ENCODE measurements at regions of chr2 and their contacts with region 1.

Region 1: DNA sequence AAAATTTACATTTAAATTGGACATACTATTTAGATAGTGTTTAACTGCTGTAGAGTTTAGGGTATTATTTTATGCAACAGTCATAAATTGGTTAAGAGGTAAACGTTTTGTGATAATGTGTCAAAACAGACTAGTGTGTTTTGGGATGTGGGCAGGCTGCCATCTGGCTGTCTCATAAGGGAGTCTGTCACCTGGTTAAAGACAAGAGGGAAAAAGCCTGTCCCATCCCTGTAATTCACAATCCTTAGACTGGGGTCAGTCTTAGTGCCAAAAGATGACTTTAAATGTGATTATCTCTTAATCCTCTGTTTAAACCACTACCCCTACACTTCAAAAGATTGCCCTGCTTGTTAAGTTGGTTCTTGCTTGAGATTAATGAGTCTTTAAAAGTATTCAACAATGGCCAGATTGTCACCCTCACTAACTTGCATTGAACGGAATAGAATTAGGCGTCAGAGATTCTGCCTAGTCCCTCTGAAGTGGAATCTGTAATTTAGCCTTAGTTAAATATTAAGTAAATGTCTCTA is 59.2 kb downstream of the SGPP2 start:
- DNase-seq: no peak
- ATAC-seq: peak; percentile 50; the same call in 2 of the 3 replicates
- H3K4me3 ChIP-seq: no peak overlapping the region
- H3K27ac ChIP-seq: no peak overlapping the region
- H3K4me1 ChIP-seq: no peaks in the 10 kb centered on the region
- H3K27me3 ChIP-seq: no peaks in the 10 kb centered on the region
- CTCF ChIP-seq: peak in 2 of 3 experiments; percentile 25 to 63; a peak in 3 of 6 replicates
- EP300 ChIP-seq: no peak
- POLR2A ChIP-seq: no peak
- RAD21 ChIP-seq: peak; percentile 38; the same call in 1 of the 2 replicates

Region 2: DNA sequence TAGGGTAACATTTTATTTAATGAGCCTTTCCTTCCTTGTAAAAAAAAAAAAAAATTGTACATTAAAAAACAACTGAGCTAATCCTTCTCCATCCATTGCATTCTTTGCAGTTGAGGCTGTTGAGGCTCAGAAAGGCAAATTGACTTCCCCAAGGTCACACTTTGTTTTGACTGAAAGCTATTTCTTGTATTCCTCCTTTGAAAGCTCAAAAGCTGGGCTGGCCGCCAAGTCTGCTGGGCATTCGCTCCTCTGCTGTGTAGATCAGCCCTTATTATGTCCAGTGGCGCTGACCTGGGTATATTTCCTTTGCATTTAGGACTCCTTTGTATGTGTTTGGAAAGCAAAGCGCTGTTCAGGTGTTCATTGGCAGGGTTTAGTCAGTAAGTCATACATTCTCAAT is 15.2 kb before region 1 on chr2:
- CTCF ChIA-PET with region 1: interaction called, 4 read pairs
- POLR2A ChIA-PET with region 1: interaction called, 3 read pairs
- RAD21 ChIA-PET with region 1: no interaction called
- SMC1A ChIA-PET with region 1: interaction called, 13 read pairs
- in situ Hi-C with region 1: no loop called
- intact Hi-C with region 1: no loop called
- DNase-seq: no peak
- ATAC-seq: no peak
- H3K4me3 ChIP-seq: no peak overlapping the region
- H3K27ac ChIP-seq: no peak overlapping the region
- H3K4me1 ChIP-seq: no peaks in the 10 kb centered on the region
- H3K27me3 ChIP-seq: no peaks in the 10 kb centered on the region
- CTCF ChIP-seq: no peak
- EP300 ChIP-seq: no peak
- POLR2A ChIP-seq: no peak
- RAD21 ChIP-seq: no peak

Measured in GM12878 (cell line).